ENCODE measurements at regions of chr18 and their contacts with region 1.

Region 1: GRCh38 chr18:7575157-7576028 is 8.3 kb downstream of the PTPRM start:
- DNase-seq: no peak
- H3K4me3 ChIP-seq: no peak overlapping the region
- H3K27ac ChIP-seq: no peak overlapping the region
- H3K4me1 ChIP-seq: peaks cover 0 to 22% of the 10 kb centered on the region in 2 donors
- H3K27me3 ChIP-seq: no peaks in the 10 kb centered on the region
- CTCF ChIP-seq: no peak
- POLR2A ChIP-seq: no peak

Region 2: DNA sequence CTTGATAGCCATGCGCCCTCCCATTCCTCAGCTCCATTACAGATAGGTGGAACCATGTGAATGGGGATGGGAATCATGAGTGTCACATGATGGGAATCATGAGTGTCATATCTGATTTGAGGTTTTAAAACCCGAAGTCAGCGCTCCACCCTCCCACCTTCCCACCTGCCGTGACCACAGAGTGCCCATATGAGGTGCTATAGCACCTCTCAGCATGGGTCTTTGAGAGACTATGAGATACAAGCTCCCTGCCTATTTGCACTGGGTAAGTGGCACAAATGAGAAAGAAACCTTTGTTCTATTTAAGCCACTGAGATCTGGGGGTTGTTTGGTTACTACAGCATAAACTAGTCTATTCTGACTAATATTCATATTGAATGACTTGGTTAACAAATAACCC is 86.8 kb before region 1 on chr18:
- intact Hi-C with region 1: no loop called
- DNase-seq: no peak
- H3K4me3 ChIP-seq: no peak overlapping the region
- H3K27ac ChIP-seq: no peak overlapping the region
- H3K4me1 ChIP-seq: no peaks in the 10 kb centered on the region
- H3K27me3 ChIP-seq: no peaks in the 10 kb centered on the region
- CTCF ChIP-seq: no peak
- POLR2A ChIP-seq: no peak

Region 3: DNA sequence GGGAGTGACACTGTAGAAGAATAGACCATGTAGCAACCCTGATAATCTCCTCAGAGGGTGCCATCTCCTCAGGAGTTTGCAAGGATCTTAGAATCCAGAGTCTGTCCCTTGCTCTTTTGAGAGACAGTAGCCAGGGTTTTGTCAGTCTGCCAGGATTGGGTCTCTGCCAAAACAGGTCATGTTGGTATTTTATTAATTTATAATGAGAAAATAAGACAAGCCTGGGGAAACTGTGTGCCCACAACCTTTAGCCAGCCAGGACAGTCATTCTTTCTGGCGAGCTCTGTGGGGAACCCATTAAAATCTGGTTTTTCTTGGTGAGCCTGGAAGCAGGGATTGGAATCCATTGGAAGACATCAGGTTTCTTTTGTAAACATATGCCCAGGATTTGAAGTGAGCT is 70.4 kb after region 1 on chr18:
- intact Hi-C with region 1: loop called in 1 of 2 experiments (anchors 10 kb)
- DNase-seq: peak; percentile 36 to 86 (median 60)
- H3K4me3 ChIP-seq: no peak overlapping the region
- H3K27ac ChIP-seq: no peak overlapping the region
- H3K4me1 ChIP-seq: peaks cover 0 to 7% of the 10 kb centered on the region in 2 donors
- H3K27me3 ChIP-seq: no peaks in the 10 kb centered on the region
- CTCF ChIP-seq: no peak
- POLR2A ChIP-seq: no peak